Activated CD8-positive, alpha-beta T cell treated with anti-CD3 and anti-CD28 coated beads for 36 hours (primary cell): ENCODE measurements at regions of chr7 and their contacts with region 1.

Region 1: GRCh38 chr7:137898839-137899721 is 52.3 kb upstream of the DGKI start:
- DNase-seq: peak; percentile 86
- ATAC-seq: peak; percentile 84
- H3K4me3 Mint-ChIP-seq: no peak overlapping the region
- H3K27ac Mint-ChIP-seq: peak overlapping the region; percentile 74
- H3K4me1 Mint-ChIP-seq: peaks cover 35% of the 10 kb centered on the region
- H3K27me3 Mint-ChIP-seq: no peaks in the 10 kb centered on the region
- CTCF ChIP-seq: peak; percentile 75

Region 2: DNA sequence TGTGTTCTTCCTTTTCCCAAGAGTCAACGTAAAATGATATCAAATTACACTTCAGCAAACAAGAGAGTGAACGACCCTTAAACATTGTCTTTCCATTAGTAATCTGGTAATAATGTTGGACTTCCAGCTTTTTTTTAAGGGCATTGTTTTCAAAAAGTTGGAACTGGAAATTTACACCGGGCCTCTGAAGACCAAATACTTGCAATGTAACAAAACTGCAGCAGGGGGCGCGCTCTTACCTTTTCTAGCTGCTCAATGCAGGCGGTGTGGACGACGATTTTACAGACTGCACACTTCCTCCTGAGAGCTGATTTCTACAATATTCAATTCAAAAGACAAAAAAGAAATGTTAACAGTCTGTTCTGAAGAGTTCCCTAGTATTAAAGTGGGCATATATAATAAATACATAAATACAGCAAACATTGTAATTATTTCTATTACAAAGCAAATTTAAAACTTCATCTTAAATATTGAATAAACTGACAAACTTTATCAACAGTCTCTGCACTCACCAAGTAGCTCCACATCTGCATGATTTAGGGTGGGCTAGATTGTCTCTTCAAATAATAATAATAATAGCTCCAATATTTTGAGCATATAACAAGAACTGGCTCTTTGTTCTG is 242.7 kb before region 1 on chr7:
- CTCF ChIA-PET with region 1: interaction called, 103 read pairs
- POLR2A ChIA-PET with region 1: no interaction called
- intact Hi-C with region 1: loop called (anchors 1 kb)
- DNase-seq: peak; percentile 87
- ATAC-seq: peak; percentile 80
- H3K4me3 Mint-ChIP-seq: no peak overlapping the region
- H3K27ac Mint-ChIP-seq: no peak overlapping the region
- H3K4me1 Mint-ChIP-seq: no peaks in the 10 kb centered on the region
- H3K27me3 Mint-ChIP-seq: peaks cover 8% of the 10 kb centered on the region
- CTCF ChIP-seq: peak; percentile 88

Region 3: DNA sequence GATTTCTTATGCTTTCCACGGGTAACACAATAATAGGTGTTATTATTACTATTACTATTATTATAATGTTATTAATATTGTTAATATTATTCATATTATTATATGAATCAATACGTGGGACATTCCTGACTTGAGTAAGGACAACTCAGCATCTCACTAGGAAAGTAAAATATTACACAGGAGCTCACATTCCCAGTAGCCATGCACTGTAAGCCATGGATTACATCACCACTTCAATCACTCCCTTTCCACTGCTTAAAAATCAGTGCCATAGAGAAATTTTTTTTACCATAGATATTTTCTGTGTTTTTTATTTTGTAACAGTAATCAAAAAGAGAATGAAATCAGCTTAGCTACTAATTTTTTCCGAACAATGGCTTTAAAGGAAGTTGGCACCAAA is 16.2 kb after region 1 on chr7:
- CTCF ChIA-PET with region 1: interaction called, 15 read pairs
- POLR2A ChIA-PET with region 1: no interaction called
- intact Hi-C with region 1: no loop called
- DNase-seq: no peak
- ATAC-seq: no peak
- H3K4me3 Mint-ChIP-seq: no peak overlapping the region
- H3K27ac Mint-ChIP-seq: no peak overlapping the region
- H3K4me1 Mint-ChIP-seq: peaks cover 3% of the 10 kb centered on the region
- H3K27me3 Mint-ChIP-seq: no peaks in the 10 kb centered on the region
- CTCF ChIP-seq: no peak

Region 4: DNA sequence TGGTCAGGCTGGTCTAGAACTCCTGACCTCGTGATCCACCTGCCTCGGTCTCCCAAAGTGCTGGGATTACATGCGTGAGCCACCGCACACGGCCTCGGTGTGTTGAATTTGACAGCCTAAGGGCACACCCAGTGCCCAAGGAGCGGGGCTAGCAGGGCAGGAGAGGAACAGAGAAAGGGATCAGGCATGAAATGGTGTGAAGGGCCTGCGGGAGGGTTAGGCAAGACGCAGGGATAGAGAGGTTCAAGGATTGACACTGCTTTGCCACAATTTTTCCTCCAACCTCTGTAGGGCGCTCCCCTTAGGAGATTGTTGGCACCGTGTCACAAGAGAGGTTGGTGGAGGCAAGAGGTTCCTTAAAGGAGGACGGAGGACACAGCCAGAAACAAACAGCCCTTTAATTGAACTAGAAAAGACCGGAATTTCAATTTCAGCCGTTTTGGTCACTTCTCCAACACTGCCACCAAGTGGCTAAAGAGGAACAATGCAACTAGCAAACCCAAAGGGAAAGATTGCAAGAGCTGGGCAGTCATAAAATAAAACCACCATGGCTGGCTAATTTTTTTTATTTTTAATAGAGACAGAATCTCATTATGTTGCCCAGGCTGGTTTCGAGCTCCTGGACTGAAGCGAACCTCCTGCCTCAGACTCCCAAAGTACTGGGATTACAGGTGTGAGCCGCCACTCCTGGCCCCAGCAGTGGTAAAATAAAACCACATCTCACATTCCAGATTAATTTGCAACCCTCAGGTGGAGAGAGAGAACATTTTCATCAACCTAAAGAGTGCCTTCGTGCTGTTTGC is 109.7 kb after region 1 on chr7:
- CTCF ChIA-PET with region 1: interaction called, 334 read pairs
- POLR2A ChIA-PET with region 1: no interaction called
- intact Hi-C with region 1: loop called (anchors 1 kb)
- DNase-seq: peak; percentile 29
- ATAC-seq: peak; percentile 68
- H3K4me3 Mint-ChIP-seq: no peak overlapping the region
- H3K27ac Mint-ChIP-seq: no peak overlapping the region
- H3K4me1 Mint-ChIP-seq: no peaks in the 10 kb centered on the region
- H3K27me3 Mint-ChIP-seq: peaks cover 2% of the 10 kb centered on the region
- CTCF ChIP-seq: peak; percentile 86

Region 5: DNA sequence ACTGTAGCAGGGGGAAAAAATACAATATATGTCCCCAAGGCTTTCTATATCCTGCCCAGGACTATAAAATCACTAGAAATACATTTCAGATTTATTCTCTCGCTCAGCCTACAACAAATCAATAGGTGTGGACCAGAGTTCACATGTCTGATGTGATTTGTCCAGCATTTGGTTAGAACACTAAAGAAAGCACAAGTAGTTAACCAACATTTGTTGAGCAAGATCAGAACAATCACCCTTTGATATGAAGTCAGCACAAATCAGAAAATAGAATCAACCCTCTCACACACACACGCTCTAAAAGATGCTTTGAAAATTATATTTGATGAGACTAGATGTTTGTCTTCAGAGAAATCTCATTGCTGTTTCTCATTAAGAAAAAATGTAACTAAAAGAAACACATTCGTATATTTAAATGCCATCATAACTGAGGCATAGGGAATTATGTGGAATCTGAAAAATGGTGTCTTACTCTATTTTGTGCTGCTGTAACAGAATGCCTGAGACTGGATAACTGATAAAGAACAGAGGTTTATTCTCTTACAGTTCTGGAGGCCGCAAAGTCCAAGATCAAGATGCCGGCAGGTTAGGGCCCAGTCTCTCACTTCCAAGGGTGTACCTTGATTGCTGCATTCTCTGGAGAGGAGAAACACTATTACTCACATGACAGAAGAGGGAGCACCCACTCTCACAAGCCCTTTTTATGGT is 187.6 kb after region 1 on chr7:
- CTCF ChIA-PET with region 1: no interaction called
- POLR2A ChIA-PET with region 1: no interaction called
- intact Hi-C with region 1: no loop called
- DNase-seq: no peak
- ATAC-seq: no peak
- H3K4me3 Mint-ChIP-seq: no peak overlapping the region
- H3K27ac Mint-ChIP-seq: no peak overlapping the region
- H3K4me1 Mint-ChIP-seq: no peaks in the 10 kb centered on the region
- H3K27me3 Mint-ChIP-seq: peaks cover 2% of the 10 kb centered on the region
- CTCF ChIP-seq: no peak